ENCODE measurements at regions of chr7 and their contacts with region 1.

Region 1: DNA sequence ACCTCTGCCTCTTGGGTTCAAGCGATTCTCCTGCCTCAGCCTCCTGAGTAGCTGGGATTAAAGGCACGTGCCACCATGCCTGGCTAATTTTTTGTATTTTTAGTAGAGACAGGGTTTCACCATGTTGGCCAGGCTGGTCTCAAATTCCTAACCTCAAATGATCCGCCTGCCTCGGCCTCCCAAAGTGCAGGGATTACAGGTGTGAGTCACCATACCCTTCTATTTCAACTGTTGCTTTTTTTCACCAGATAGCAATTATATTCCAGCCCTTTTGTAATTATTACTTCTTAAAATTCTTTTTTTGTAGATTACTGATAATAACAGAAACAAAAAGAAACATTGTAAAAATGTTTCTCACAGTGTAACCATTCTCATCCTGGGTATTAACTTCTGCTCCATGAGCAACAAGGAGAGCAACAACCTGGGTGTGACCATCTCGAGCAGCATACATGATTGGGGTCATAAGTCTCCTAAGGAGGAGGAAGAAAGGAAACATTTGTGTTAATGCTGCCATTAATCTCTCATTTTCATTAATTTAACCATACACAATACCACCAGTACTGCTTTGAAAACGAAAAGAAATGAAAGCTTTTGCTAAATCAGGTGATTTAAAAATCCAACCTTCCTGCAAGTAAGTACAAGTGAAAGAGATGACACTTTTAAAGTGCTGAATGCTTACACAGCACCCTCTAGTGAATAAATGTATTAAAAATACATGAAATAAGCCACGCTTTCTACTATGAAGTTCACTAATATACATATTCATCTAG is 41.8 kb downstream of the ASZ1 start:
- DNase-seq: peak; percentile 7
- H3K4me3 ChIP-seq: no peak overlapping the region
- H3K27ac ChIP-seq: no peak overlapping the region
- H3K4me1 ChIP-seq: no peaks in the 10 kb centered on the region
- CTCF ChIP-seq: peak; percentile 73

Region 2: DNA sequence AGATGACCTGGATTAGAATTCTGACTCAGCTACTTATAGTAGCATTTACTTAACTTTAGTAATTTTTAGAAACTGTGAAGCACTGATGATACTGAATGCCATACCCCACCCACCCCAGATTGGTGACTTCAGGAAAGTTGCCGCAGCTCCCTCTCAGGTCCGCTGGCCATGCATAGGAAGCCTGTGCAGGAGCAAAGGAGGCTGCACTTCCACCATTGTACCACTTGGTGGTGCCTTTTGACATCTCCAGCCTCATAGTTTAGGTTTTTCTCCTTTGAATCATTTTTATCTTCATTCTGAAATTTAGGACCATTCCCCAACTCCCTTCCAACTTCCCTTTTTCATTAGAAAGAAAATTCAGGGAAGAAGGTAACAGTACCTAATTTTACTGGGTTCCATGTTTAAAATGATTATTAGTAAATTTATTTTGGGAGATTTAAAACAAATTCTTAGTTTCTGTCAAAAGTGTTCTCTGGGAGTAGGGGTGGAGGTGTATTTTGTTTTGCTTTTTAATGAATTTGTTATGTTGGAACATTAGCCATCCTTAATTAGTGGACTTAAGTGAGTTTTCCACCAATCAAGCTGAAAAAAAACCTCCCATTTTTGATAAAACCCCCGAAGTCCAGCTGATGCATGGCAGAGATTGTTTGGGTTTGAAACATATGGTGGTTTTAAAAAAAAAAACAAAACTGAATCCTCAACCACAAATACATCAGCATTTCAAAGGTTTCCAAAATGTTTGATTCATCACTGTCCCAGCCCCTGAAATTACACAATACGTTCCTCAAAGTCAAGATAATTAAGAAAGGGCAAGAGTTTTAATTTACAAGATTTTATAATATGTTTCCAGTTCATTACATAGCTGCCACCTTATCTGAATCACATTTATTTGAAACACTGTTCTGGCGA is 172.3 kb before region 1 on chr7:
- CTCF ChIA-PET with region 1: no interaction called
- POLR2A ChIA-PET with region 1: no interaction called
- intact Hi-C with region 1: loop called (anchors 5 kb)
- DNase-seq: peak; percentile 49
- H3K4me3 ChIP-seq: no peak overlapping the region
- H3K27ac ChIP-seq: no peak overlapping the region
- H3K4me1 ChIP-seq: no peaks in the 10 kb centered on the region
- CTCF ChIP-seq: peak; percentile 88